ENCODE measurements at regions of chr14 and their contacts with region 1.

Region 1: DNA sequence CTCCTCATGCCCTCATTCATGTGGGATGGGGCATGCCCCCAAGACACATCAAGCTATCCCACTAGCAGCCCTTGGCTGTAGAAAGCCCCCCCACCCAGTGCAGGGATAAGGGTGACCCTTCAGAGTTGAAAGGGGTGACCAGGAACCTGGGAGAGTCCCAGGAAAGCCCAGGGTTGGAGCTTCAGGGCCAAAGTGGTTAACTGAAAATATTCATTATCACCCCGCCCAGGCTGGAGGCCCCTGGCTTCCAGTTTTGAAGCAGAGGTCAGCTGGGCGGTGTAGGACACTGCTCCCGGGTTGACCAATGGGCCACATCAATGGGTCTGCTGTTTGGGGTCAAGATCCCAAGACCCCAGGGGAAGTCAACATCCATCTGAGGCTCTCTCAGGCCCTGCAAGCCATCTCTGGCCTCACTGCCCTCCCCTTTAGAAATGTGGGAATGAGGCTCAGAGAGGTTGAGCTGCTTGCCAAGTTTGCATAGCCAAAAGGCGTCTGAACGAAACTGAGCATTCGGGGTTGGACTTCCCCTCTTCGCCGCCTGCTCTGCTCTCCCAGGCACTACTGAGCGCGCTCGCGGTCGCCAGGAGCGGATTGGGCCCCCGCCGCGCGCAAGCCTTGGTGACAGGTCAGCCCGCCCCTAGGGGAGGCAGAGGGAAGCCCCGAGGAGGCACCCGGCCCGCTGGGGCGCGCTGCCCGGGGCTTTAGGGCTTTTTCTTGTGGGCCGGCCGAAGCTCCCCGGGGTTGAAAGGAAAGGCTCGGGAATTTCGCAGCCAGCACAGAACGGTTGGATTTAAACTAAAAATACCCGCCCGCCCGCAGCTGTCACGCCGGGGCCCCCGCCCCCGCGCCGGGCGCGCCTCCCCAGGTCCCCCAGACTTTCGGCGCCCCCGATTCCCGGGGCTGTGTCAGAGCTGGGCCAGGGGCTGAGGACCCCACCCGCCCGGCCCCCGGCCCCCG is 576 bp downstream of the SYNE3 start:
- DNase-seq: peak; percentile 93
- ATAC-seq: peak; percentile 85
- H3K4me3 Mint-ChIP-seq: peak overlapping the region; percentile 87
- H3K27ac Mint-ChIP-seq: peak overlapping the region; percentile 94
- H3K4me1 Mint-ChIP-seq: peaks cover 68% of the 10 kb centered on the region
- H3K27me3 Mint-ChIP-seq: no peaks in the 10 kb centered on the region

Region 2: GRCh38 chr14:93975791-93976476 is 1539.9 kb before region 1 on chr14:
- CTCF ChIA-PET with region 1: no interaction called
- POLR2A ChIA-PET with region 1: no interaction called
- intact Hi-C with region 1: loop called in 1 of 2 experiments (anchors 5 kb)
- DNase-seq: peak; percentile 69
- ATAC-seq: peak; percentile 51
- H3K4me3 Mint-ChIP-seq: peak overlapping the region; percentile 64
- H3K27ac Mint-ChIP-seq: peak overlapping the region; percentile 97
- H3K4me1 Mint-ChIP-seq: peaks cover 89% of the 10 kb centered on the region
- H3K27me3 Mint-ChIP-seq: no peaks in the 10 kb centered on the region

Region 3: GRCh38 chr14:95265106-95266094 is 250.5 kb before region 1 on chr14:
- CTCF ChIA-PET with region 1: interaction called, 3 read pairs
- POLR2A ChIA-PET with region 1: no interaction called
- intact Hi-C with region 1: loop called (anchors 1 kb)
- DNase-seq: peak; percentile 66
- ATAC-seq: peak; percentile 83
- H3K4me3 Mint-ChIP-seq: no peak overlapping the region
- H3K27ac Mint-ChIP-seq: peak overlapping the region; percentile 35
- H3K4me1 Mint-ChIP-seq: peaks cover 39% of the 10 kb centered on the region
- H3K27me3 Mint-ChIP-seq: no peaks in the 10 kb centered on the region

Region 4: GRCh38 chr14:95370076-95370475 is 145.8 kb before region 1 on chr14:
- CTCF ChIA-PET with region 1: no interaction called
- POLR2A ChIA-PET with region 1: no interaction called
- intact Hi-C with region 1: no loop called
- DNase-seq: no peak
- ATAC-seq: no peak
- H3K4me3 Mint-ChIP-seq: no peak overlapping the region
- H3K27ac Mint-ChIP-seq: no peak overlapping the region
- H3K4me1 Mint-ChIP-seq: no peaks in the 10 kb centered on the region
- H3K27me3 Mint-ChIP-seq: peaks cover 21% of the 10 kb centered on the region

Region 5: DNA sequence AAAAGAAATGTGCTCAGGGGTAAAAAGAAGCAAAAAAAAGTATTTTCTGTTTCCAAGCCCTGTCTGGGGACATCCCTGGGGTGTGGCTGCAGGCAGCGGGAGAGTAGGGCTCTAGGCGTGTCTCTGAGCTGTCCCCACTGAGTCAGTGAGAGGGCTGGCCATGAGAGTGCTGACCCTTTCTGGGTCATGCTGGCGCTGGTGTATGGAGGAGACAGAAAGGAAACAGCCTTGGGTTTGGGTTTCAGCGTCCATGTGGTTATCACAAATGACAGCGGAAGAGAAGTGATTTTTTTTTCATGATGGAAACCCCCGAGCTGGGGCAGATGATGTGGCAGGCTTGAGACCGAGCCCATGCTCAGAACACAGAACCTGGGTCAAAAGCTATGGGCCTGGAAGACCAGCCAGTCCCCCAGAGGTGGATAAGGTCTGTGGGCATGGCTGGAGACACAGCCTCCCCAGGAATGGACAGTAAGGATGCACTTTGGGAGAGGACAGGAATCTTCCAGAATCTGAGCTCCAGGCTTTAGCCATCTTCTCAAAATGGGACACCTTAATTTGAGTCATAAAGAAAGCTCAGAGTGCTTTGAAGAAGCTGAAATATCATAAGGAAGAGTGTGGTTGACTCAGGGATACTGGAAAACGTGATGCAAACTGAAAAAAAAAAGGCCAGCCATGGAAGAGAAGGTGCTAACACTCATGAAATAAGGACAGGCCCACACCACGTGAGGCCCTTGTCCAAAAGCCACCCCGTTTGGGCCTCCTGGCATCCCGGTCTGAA is 35.6 kb before region 1 on chr14:
- CTCF ChIA-PET with region 1: interaction called, 3 read pairs
- POLR2A ChIA-PET with region 1: no interaction called
- intact Hi-C with region 1: loop called in 1 of 2 experiments (anchors 1 kb)
- DNase-seq: peak; percentile 66
- ATAC-seq: peak; percentile 87
- H3K4me3 Mint-ChIP-seq: peak overlapping the region; percentile 12
- H3K27ac Mint-ChIP-seq: peak overlapping the region; percentile 85
- H3K4me1 Mint-ChIP-seq: peaks cover 43% of the 10 kb centered on the region
- H3K27me3 Mint-ChIP-seq: no peaks in the 10 kb centered on the region

Region 6: GRCh38 chr14:95527387-95528002 is 11.6 kb after region 1 on chr14:
- CTCF ChIA-PET with region 1: interaction called, 18 read pairs
- POLR2A ChIA-PET with region 1: interaction called, 5 read pairs
- intact Hi-C with region 1: loop called (anchors 1 kb)
- DNase-seq: peak; percentile 76
- ATAC-seq: no peak
- H3K4me3 Mint-ChIP-seq: no peak overlapping the region
- H3K27ac Mint-ChIP-seq: peak overlapping the region; percentile 90
- H3K4me1 Mint-ChIP-seq: peaks cover 81% of the 10 kb centered on the region
- H3K27me3 Mint-ChIP-seq: no peaks in the 10 kb centered on the region

Region 7: DNA sequence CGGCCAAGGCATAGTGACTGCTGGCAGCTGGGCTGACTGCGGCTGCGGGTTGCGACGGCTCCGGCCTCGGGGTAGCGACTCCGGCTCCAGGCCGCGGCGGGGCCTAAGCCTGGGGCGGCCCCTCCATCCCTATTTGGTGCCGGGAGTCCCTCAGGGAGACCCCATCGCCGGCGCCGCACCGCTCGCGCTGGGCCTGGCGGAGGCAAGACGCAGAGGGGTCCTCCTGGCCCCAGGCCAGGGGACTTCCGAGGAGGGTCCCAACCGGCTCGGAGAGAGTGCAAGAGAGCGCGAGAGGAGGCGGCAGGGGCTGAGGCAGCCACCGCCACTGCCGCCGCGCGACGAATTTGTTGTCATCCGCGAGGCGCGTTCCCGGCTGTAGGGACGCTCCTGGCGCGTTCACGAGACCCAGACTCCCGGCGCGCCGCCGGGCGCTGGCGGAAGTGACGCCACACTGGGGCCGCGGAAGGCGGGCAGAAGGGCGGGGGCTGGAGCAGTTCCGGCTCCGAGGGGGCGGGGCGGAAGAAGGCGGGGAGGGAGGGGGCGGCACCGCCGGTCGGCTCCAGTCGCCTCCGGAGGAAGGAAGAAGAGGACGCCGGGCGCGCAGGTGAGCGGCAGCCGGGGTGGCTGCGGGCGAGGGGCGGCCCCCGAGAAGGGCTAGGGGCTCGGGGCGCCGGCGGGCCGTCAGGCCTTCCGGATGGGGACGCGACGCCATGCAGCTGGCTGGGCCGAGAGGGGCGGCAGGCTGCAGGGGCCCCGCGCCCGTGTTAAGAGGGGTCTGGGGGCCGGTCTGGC is 847.3 kb after region 1 on chr14 and contains the starts of genes ATG2B and GSKIP:
- CTCF ChIA-PET with region 1: no interaction called
- POLR2A ChIA-PET with region 1: no interaction called
- intact Hi-C with region 1: loop called in 1 of 2 experiments (anchors 5 kb)
- DNase-seq: peak; percentile 99
- ATAC-seq: peak; percentile 79
- H3K4me3 Mint-ChIP-seq: peak within 1 kb of the TSS; percentile 86
- H3K27ac Mint-ChIP-seq: peak within 1 kb of the TSS; percentile 90
- H3K4me1 Mint-ChIP-seq: peaks cover 55% of the 10 kb centered on the region
- H3K27me3 Mint-ChIP-seq: no peaks in the 10 kb centered on the region
- total RNA-seq, gene ATG2B: 13.5 to 17.6 TPM
- total RNA-seq, gene GSKIP: 12.1 to 20.7 TPM